ENCODE measurements at regions of chr19 and their contacts with region 1.

Region 1: GRCh38 chr19:5524081-5524480 is 43.7 kb downstream of the TINCR start:
- DNase-seq: no peak
- H3K4me3 ChIP-seq: no peak overlapping the region
- H3K27ac ChIP-seq: no peak overlapping the region
- H3K4me1 ChIP-seq: no peaks in the 10 kb centered on the region
- H3K27me3 ChIP-seq: no peaks in the 10 kb centered on the region; the same call in 1 of the 2 replicates
- CTCF ChIP-seq: no peak
- EP300 ChIP-seq: no peak
- RAD21 ChIP-seq: no peak

Region 2: GRCh38 chr19:5536337-5536894 is 12.3 kb after region 1 on chr19:
- CTCF ChIA-PET with region 1: interaction called, 13 read pairs
- POLR2A ChIA-PET with region 1: no interaction called
- DNase-seq: peak; percentile 83
- H3K4me3 ChIP-seq: no peak overlapping the region
- H3K27ac ChIP-seq: no peak overlapping the region
- H3K4me1 ChIP-seq: no peaks in the 10 kb centered on the region; a peak in 1 of 4 replicates
- H3K27me3 ChIP-seq: no peaks in the 10 kb centered on the region
- CTCF ChIP-seq: no peak
- EP300 ChIP-seq: no peak
- RAD21 ChIP-seq: no peak